ENCODE measurements at regions of chr12 and their contacts with region 1.

Region 1: GRCh38 chr12:123388177-123388947 is 4.4 kb downstream of the KMT5A start:
- DNase-seq: peak; percentile 78
- H3K4me3 Mint-ChIP-seq: peak overlapping the region; percentile 82
- H3K27ac Mint-ChIP-seq: peak overlapping the region; percentile 93
- H3K4me1 Mint-ChIP-seq: peaks cover 39% of the 10 kb centered on the region
- H3K27me3 Mint-ChIP-seq: no peaks in the 10 kb centered on the region

Region 2: DNA sequence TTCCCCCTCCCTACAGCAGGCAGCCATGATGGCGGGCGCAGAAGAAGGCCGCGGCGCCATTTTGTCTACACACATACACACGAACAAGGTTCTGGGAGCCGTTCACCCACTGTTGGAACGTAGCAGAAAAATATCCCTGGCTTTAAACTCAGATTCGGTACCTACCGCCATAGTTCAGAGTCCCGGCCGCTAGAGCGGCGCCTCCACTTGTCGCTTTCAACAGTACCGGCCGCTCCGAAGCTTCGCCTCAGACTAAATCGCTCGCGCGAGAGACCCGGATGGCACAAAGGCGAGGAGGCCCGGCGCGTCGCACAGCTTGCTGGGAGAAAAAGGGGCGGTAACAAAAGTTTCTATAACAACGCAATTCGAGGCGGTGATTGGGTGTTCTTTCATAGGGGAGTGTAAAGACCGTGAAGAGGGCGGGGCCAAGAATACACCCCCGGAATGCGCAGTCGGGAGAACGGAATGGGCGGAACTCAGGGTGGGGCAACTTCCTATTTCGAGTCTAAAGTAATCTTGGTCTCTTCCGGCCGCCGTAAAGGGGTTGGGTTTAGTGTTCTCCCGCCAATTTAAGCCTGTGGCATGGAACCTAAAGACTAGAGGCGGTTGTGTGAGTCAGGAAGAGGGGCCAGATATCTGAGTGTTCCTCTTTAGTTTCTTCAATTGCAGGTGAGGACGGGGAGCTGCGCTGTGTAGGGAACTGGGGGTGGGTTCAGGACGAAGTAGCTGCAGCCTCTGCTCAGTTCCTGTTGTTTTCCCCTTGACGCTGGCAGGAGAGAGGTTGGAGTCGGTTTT is 861.5 kb before region 1 on chr12 and contains the starts of genes KNTC1 and RSRC2:
- intact Hi-C with region 1: loop called (anchors 1 kb)
- DNase-seq: peak; percentile 99
- H3K4me3 Mint-ChIP-seq: no peak within 1 kb of the TSS
- H3K27ac Mint-ChIP-seq: no peak within 1 kb of the TSS
- H3K4me1 Mint-ChIP-seq: peaks cover 43% of the 10 kb centered on the region
- H3K27me3 Mint-ChIP-seq: no peaks in the 10 kb centered on the region
- total RNA-seq, gene KNTC1: 122 and 126 TPM in 2 replicates
- total RNA-seq, gene RSRC2: 101 and 103 TPM in 2 replicates

Region 3: DNA sequence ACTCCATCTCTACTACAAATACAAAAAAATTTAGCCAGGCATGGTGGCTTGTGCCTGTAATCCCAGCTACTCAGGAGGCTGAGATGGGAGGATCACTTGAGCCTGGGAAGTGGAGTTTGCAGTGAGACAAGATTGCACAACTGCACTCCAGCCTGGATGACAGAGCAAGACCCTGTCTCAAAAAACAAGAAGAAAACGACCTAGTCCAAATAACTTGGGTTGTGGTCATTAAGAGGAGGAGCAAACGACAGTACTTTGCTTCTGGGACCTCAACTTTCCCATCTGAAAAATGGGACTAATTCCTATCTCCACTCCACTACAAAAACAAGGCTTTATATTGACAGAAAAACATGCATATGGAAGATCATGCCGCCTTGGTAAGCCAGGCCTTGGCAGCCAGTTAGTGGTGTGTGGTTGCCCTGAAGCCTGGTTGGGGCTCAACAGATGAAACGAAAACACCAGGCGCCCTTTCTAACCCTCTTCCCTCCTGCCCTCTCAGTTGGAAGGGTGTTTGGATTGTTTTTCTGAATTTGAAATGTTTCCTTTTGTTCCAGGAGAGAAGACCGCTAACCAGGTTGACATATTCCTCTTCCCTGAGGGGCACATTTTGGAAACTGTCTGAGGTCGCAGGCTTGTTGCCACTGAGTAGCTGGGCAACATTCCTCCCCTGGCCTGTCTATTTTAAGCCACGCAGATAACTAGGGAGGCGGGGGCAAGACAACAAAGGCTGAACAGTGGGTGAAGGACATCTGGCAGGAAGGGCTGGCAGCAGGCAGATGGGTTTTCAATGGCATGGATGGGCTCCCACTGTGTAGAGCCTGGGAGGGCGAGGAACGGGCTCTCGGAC is 478.7 kb before region 1 on chr12:
- intact Hi-C with region 1: no loop called
- DNase-seq: no peak
- H3K4me3 Mint-ChIP-seq: no peak overlapping the region
- H3K27ac Mint-ChIP-seq: no peak overlapping the region
- H3K4me1 Mint-ChIP-seq: no peaks in the 10 kb centered on the region
- H3K27me3 Mint-ChIP-seq: peaks cover 21% of the 10 kb centered on the region

Region 4: GRCh38 chr12:123271001-123271729 is 117.2 kb before region 1 on chr12:
- intact Hi-C with region 1: loop called (anchors 1 kb)
- DNase-seq: peak; percentile 68
- H3K4me3 Mint-ChIP-seq: no peak overlapping the region
- H3K27ac Mint-ChIP-seq: no peak overlapping the region
- H3K4me1 Mint-ChIP-seq: peaks cover 9% of the 10 kb centered on the region
- H3K27me3 Mint-ChIP-seq: peaks cover 5% of the 10 kb centered on the region

Region 5: DNA sequence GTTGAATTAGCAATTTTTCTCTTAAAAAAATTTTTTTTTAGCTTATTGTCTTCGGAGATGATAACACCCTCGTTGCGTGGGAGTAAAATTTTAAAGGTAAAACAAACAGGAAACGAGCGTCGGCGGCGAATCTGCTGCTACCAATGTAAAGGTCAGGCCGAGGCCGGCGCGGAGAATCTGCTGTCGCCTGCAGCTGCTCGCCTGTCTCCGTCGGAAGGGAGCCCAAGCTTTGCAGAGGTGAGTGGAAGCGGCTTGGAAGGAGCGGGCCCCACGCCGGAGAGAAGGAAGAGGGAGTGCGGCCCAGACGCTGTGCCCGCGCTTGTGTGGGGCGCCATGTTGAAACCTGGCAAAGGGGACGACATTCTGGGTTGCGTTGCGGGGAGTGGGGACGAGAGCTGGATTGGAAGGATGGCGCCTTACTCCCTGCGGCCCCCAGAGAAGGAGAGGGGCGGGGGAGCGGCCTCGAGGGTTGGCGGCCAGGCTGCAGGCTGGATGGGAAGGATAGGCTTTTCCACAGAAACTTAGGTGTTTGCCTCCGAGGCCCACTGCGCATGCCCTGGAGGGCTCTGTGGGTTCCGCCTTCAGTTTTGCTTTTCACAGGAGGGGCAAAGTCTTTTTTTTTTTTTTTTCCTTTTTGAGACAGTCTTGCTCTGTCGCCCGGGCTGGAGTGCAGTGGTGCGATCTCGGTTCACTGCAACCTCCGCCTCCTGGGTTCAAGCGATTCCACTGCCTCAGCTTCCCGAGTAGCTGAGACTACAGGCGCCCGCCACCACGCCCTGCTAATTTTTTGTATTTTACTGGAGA is 69.8 kb after region 1 on chr12 and contains the start of gene SNRNP35:
- intact Hi-C with region 1: loop called (anchors 1 kb)
- DNase-seq: peak; percentile 79
- H3K4me3 Mint-ChIP-seq: peak within 1 kb of the TSS; percentile 95
- H3K27ac Mint-ChIP-seq: peak within 1 kb of the TSS; percentile 99
- H3K4me1 Mint-ChIP-seq: peaks cover 17% of the 10 kb centered on the region
- H3K27me3 Mint-ChIP-seq: no peaks in the 10 kb centered on the region
- total RNA-seq, gene SNRNP35: 31.5 and 34.5 TPM in 2 replicates

Region 6: GRCh38 chr12:123533672-123534643 is 145.6 kb after region 1 on chr12 and contains the start of gene RILPL1:
- intact Hi-C with region 1: loop called (anchors 5 kb)
- DNase-seq: peak; percentile 22
- H3K4me3 Mint-ChIP-seq: peak within 1 kb of the TSS; percentile 85
- H3K27ac Mint-ChIP-seq: peak within 1 kb of the TSS; percentile 74
- H3K4me1 Mint-ChIP-seq: peaks cover 25% of the 10 kb centered on the region
- H3K27me3 Mint-ChIP-seq: peaks cover 18% of the 10 kb centered on the region
- total RNA-seq, gene RILPL1: 4.4 and 4.5 TPM in 2 replicates

Region 7: DNA sequence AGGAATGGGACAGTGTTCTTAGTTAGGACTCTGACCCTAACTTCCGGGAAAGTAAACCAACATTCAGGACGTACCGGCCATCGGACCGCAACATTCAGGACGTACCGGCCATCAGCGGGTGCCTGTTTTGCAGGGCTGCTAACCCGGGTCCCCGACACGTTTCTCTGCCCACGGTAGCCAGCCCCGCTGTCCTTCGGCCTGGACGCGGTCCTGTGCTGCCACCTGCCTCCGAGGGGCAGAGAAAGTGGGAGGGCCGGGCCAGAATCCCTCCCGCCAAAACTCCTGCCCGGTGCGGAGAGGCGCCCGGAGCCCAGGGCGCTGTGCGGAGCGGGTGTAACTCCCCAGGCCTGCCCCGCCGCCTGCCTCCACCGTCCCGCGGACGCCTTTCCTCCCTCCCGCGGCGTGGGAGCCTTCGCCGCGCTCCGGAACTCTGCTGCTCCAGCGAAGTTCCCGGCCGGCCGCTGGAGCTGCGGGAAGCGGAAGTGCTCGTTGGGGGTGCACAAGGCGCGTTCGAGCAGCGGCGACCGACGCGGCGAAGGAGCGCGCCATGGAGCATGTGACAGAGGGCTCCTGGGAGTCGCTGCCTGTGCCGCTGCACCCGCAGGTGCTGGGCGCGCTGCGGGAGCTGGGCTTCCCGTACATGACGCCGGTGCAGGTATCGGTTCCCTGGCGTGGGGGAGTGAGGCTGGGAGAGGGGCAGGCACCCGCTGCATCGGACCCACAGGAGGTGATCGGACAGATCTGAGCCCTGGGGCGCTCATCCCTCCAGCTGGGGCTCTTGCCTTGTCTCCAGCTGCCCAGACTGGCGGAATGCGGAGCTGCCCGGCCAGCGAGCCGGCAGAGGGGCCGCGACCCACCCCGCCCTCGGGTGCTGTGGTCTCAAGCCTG is 213.5 kb after region 1 on chr12 and contains the start of gene DDX55:
- intact Hi-C with region 1: loop called (anchors 5 kb)
- DNase-seq: peak; percentile 83
- H3K4me3 Mint-ChIP-seq: peak within 1 kb of the TSS; percentile 87
- H3K27ac Mint-ChIP-seq: peak within 1 kb of the TSS; percentile 90
- H3K4me1 Mint-ChIP-seq: peaks cover 36% of the 10 kb centered on the region
- H3K27me3 Mint-ChIP-seq: no peaks in the 10 kb centered on the region
- total RNA-seq, gene DDX55: 72.1 and 72.3 TPM in 2 replicates

Measured in activated T-helper 1 cell treated with anti-CD3 and anti-CD28 coated beads, Interleukin-12 subunit alpha, Interleukin-12 subunit beta, Interleukin-2, Interleukin-4 antibody, amounts not matched to agents 30 ng/mL and 10 ng/mL and 1 ng/mL, durations not matched to agents 14 hours and 24 hours and 36 hours (primary cell).